ENCODE measurements at regions of chr9 and their contacts with region 1.

Region 1: DNA sequence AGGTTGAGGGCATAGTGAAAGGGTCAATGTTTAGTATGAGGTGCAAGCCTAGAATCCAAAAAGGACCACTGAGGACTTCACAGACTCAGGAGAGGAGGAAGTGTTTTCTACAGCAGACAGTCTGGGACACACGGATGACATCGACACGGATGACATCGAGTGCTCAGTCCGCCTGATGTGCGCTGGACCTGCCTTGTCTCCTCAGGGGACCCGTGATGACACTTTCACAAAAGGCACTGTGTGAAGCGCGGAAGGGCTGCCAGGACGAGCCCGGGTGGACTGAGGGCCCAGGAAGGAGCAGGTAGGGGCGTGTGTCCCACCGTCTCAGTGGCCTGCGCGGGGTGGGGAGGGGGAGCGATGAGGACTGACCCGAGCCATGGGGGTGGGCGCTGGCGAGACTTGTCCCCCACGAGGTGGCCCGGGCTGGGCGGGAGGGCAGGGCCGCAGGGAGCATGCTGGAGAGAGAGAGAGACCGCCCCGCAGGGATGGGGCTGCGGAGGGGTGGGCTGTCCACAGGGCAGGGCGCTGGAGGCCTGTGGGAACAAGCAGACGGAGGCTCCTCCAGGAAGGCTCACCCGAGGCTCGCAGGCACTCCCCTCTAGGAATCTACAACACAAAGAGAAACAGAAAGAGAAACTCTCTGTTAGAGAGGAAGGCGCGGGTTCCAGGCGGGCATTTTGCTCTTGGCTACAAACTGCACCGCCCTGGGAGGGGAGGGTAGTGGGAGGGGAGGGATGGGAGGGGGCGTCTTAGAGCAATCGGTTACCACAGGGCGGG is 54.9 kb downstream of the USP20 start:
- DNase-seq: no peak

Region 2: DNA sequence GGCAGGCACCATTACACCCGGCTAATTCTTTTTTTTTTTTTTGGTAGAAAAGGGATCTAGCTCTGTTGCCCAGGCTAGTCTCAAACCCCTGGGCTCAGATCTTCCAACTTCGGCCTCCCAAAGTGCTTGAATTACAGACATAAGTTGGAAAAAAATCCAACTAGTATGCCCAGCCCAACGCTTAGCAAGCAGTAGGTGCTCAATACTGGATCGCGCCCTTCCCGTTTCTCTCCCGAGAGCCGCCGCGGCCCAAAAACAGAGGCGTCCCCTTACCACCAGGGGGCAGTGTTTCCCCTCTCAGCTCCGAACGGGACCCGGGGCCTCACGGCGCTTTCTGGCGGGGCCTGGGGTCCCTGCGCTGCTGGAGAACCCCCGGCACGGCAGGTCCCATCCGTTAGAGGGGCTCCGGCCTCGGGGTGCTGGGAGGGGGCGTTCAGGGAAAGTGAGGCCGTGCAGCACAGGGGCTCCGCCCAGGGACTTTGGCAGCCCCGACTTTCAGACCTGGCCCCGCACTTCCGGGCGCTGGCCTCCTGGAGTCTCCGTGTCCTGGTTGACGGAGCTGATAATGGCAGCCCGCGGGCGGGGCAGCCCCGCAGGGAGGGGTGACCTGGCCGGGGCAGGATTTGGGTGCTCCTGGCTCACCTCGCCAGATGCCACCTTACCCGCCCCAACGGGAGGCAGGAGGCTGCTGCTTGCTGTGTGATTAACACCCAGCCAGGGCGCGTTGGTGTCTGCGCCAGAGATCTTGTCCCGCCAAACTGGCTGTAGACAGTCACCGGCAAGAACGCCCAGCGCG is 152.5 kb before region 1 on chr9:
- intact Hi-C with region 1: no loop called
- DNase-seq: peak; percentile 96

Region 3: DNA sequence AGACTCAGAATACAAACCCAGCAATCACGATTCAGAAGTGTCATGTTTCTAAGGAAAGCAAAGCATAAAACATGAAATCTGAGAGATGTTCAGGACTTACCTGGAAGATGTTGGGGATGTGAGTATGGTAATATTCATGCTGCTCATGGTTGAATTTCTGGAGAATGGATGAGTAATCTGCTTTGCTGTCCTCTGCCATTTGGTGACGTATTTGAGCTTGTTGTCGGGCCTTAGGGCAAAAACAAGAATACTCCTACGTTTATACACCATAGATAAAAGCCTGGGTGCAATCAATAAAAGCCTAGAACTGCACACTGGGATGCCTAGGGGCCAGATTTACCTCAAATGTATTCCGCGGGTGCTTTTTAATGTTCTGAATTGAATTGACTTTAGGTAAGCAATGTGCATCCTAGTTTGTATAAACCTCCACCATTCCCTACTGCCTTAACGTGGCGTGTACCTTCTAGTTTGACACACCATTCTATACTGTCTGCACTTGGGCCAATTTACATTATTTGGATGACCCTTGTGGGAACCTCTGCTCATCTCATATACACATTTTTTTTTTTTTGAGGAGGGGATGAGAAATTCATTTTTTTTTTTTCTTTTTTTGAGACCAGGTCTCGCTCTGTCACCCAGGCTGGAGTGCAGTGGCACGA is 39.5 kb after region 1 on chr9:
- intact Hi-C with region 1: loop called in 1 of 2 experiments (anchors 5 kb)
- DNase-seq: no peak

Region 4: GRCh38 chr9:130023144-130023787 is 133.1 kb after region 1 on chr9:
- intact Hi-C with region 1: loop called in 1 of 2 experiments (anchors 10 kb)
- DNase-seq: no peak

Region 5: GRCh38 chr9:130199605-130200004 is 309.5 kb after region 1 on chr9:
- intact Hi-C with region 1: no loop called
- DNase-seq: no peak

Region 6: DNA sequence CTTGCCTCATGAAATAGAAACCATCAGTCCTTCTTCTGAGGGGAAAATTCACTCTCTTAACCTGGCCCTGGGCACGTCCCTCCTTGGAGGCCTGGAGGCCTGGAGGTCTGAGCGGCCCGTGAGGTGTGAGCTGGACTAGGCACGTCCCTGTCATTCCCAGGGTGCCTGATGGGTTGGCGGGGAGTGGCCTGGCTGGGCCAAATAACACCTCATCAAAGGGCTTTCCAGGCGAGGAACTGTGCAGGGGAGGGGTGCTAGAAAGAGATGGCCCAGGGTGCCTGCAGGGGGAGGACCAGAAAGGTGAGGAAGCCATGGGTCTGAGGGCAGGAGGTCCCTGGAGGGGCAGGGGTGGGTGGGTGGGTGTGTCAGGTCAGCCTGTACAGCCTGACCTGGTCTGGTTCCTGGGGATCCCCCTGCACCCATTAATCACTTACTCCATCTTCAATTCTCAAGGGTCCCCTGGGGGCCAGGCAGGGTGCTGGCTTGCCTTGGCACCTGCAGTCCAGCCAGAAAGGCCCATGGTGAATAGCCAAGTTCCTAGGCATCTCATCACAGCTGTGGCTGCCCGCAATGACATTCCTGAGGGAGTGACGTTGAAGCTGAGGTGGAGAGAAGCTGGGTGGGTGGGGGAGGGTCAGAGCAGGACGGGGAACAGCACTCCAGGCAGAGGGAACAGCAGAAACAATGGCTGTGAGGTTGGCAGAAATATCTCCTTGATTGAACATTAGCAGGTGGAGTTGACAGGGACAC is 385.8 kb after region 1 on chr9:
- intact Hi-C with region 1: no loop called
- DNase-seq: peak; percentile 53